ENCODE measurements at regions of chr11 and their contacts with region 1.

Region 1: DNA sequence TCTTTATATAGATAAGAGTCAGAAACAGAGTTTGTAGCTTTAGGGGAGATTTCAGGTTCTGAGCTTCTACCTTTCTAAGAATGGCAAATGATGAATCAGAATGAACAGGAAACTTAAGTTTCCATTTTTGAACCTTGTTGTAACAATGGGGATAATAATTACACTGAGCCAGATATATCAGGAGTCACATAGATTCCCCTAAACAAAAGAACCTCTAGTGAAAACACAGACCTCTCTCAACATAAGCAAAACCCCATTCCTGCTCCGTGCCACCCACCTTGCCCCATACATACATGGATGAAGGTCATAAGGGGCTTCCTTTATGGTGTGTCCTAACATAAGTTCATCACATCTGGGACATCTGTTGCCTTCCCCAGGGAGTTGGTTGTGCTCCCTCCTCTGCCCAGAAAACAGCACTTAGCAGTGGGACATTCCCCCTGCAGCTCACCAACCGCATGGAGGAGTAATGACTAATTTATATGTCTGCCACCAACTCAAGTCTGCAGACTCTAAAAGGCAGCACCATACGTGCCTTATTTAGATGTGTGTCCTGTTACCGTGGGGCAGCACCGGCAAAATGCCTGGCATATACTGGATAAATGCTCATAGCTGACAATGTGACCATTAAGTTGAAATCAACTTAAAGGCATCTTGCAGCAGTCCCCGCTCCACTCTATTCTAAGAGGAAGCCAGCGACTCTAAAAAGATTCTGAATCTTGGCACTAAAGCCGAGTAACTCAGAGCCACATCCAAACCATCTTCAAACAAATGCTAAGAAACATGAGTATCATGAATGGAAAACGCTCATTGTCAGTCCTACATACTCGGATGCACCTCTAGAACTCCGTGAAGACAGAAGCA is 8.0 kb downstream of the JAML start:
- DNase-seq: peak; percentile 79
- ATAC-seq: peak; percentile 70
- H3K4me3 Mint-ChIP-seq: peak overlapping the region; percentile 96
- H3K27ac Mint-ChIP-seq: peak overlapping the region; percentile 100
- H3K4me1 Mint-ChIP-seq: peaks cover 84% of the 10 kb centered on the region
- H3K27me3 Mint-ChIP-seq: no peaks in the 10 kb centered on the region
- CTCF ChIP-seq: no peak

Region 2: GRCh38 chr11:118227865-118228785 is 11.3 kb after region 1 on chr11:
- CTCF ChIA-PET with region 1: interaction called, 11 read pairs
- POLR2A ChIA-PET with region 1: interaction called, 182 read pairs
- intact Hi-C with region 1: no loop called
- DNase-seq: peak; percentile 60
- ATAC-seq: peak; percentile 2
- H3K4me3 Mint-ChIP-seq: peak overlapping the region; percentile 52
- H3K27ac Mint-ChIP-seq: no peak overlapping the region
- H3K4me1 Mint-ChIP-seq: peaks cover 39% of the 10 kb centered on the region
- H3K27me3 Mint-ChIP-seq: no peaks in the 10 kb centered on the region
- CTCF ChIP-seq: no peak

Measured in activated CD8-positive, alpha-beta T cell treated with anti-CD3 and anti-CD28 coated beads for 36 hours (primary cell).